Activated T-helper 1 cell treated with anti-CD3 and anti-CD28 coated beads, Interleukin-12 subunit alpha, Interleukin-12 subunit beta, Interleukin-2, Interleukin-4 antibody, amounts not matched to agents 30 ng/mL and 10 ng/mL and 1 ng/mL, durations not matched to agents 14 hours and 24 hours and 36 hours (primary cell): ENCODE measurements at regions of chr1 and their contacts with region 1.

Region 1: DNA sequence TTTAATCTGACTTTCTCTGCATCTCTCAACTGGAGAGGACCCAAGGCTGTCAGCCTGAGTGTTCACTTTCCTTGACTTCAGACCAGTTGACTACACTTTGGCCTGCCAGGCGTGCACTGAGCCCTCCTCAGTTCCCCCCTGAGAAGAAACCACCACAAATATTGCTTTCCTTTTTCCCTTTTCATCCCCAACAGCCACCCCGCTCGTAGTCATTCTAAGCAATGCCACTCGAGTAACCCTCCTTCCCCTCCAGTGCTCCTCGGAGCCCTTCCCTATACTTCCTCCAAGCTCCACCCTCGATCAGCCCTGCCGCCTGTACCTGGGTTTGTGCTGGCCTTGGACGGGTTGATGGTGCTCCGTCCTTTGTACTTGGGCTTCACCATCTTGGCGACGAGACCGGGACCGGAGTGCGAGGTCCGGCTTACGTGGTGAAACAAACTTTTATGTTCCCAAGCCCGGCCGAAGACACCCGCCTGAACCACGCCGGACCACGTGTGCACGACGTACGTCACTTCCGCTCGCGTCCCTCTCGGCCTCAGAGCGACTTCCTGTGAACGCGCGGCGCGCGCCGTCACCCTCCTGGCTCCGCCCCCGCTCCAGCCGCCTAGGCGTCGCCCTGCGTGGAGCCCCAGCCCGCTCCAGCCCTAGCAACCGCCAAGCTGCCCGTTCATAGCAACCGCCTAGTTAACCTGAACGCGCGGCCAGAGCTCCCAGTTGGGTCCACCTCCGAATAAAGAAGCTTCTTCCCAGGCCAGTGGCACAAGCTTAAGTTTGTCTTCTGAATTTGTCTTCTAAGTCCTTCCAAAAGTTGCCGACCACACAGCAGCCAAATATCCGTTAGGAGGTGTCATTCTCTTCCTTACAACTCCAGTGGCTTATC is at the start of gene GNL2:
- DNase-seq: peak; percentile 97
- H3K4me3 Mint-ChIP-seq: peak within 1 kb of the TSS; percentile 96
- H3K27ac Mint-ChIP-seq: peak within 1 kb of the TSS; percentile 90
- H3K4me1 Mint-ChIP-seq: peaks cover 20% of the 10 kb centered on the region
- H3K27me3 Mint-ChIP-seq: peaks cover 4% of the 10 kb centered on the region
- total RNA-seq, gene GNL2: 108 and 113 TPM in 2 replicates

Region 2: GRCh38 chr1:37479255-37480124 is 116.2 kb before region 1 on chr1:
- intact Hi-C with region 1: loop called (anchors 1 kb)
- DNase-seq: peak; percentile 84
- H3K4me3 Mint-ChIP-seq: peak overlapping the region; percentile 100
- H3K27ac Mint-ChIP-seq: peak overlapping the region; percentile 97
- H3K4me1 Mint-ChIP-seq: peaks cover 42% of the 10 kb centered on the region
- H3K27me3 Mint-ChIP-seq: peaks cover 2% of the 10 kb centered on the region

Region 3: DNA sequence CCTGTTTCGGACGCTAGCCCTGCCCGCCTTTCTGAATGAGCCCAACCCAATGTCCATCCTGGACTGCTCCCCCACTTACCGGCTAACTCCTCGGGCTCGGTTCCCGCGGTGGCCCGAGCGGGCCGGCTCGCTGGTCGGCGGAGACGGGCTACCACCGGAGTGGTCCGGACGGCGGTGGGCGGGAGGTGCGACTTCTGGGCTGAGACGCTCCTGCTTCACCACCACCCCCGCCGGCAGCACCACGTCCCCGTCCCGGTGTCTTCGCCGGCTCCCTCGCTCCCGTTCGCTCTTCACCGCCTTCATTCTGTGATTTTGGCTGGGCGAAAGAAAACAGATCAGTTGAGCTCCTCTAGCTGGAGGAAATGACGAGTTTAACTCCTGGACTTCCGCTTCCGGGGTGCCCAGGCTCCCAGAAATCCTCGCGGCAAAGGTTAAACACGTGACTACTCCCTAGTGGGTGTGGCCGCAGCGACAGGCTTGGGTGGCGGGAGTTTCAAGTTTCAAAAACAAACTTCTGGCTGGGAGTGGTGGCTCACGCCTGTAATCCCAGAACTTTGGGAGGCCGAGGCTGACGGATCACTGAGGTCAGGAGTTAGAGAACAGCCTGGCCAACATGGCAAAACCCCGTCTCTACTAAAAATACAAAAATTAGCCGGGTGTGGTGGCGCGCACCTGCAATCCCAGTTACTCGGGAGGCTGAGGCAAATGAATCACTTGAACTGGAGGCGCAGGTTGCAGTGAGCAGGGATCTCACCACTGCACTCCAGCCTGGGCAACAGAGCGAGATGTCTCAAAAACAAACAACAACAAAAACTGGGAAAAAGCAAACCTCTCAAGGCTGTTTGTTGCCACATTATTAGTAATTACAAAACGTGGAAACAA is 41.5 kb before region 1 on chr1 and contains the start of gene SNIP1:
- intact Hi-C with region 1: loop called (anchors 1 kb)
- DNase-seq: peak; percentile 89
- H3K4me3 Mint-ChIP-seq: peak within 1 kb of the TSS; percentile 98
- H3K27ac Mint-ChIP-seq: peak within 1 kb of the TSS; percentile 98
- H3K4me1 Mint-ChIP-seq: peaks cover 49% of the 10 kb centered on the region
- H3K27me3 Mint-ChIP-seq: no peaks in the 10 kb centered on the region
- total RNA-seq, gene SNIP1: 28.1 and 30.2 TPM in 2 replicates

Region 4: GRCh38 chr1:37661401-37661800 is 65.7 kb after region 1 on chr1:
- intact Hi-C with region 1: no loop called
- DNase-seq: no peak
- H3K4me3 Mint-ChIP-seq: no peak overlapping the region
- H3K27ac Mint-ChIP-seq: no peak overlapping the region
- H3K4me1 Mint-ChIP-seq: no peaks in the 10 kb centered on the region
- H3K27me3 Mint-ChIP-seq: peaks cover 9% of the 10 kb centered on the region

Region 5: GRCh38 chr1:37682334-37682987 is 86.8 kb after region 1 on chr1:
- intact Hi-C with region 1: loop called (anchors 1 kb)
- DNase-seq: peak; percentile 61
- H3K4me3 Mint-ChIP-seq: no peak overlapping the region
- H3K27ac Mint-ChIP-seq: no peak overlapping the region
- H3K4me1 Mint-ChIP-seq: no peaks in the 10 kb centered on the region
- H3K27me3 Mint-ChIP-seq: no peaks in the 10 kb centered on the region

Region 6: GRCh38 chr1:38012363-38013226 is 416.9 kb after region 1 on chr1 and contains the start of gene UTP11:
- intact Hi-C with region 1: loop called (anchors 1 kb)
- DNase-seq: peak; percentile 87
- H3K4me3 Mint-ChIP-seq: peak within 1 kb of the TSS; percentile 96
- H3K27ac Mint-ChIP-seq: peak within 1 kb of the TSS; percentile 93
- H3K4me1 Mint-ChIP-seq: peaks cover 54% of the 10 kb centered on the region
- H3K27me3 Mint-ChIP-seq: no peaks in the 10 kb centered on the region
- total RNA-seq, gene UTP11: 106 and 108 TPM in 2 replicates